ENCODE measurements at regions of chr3 and their contacts with region 1.

Region 1: DNA sequence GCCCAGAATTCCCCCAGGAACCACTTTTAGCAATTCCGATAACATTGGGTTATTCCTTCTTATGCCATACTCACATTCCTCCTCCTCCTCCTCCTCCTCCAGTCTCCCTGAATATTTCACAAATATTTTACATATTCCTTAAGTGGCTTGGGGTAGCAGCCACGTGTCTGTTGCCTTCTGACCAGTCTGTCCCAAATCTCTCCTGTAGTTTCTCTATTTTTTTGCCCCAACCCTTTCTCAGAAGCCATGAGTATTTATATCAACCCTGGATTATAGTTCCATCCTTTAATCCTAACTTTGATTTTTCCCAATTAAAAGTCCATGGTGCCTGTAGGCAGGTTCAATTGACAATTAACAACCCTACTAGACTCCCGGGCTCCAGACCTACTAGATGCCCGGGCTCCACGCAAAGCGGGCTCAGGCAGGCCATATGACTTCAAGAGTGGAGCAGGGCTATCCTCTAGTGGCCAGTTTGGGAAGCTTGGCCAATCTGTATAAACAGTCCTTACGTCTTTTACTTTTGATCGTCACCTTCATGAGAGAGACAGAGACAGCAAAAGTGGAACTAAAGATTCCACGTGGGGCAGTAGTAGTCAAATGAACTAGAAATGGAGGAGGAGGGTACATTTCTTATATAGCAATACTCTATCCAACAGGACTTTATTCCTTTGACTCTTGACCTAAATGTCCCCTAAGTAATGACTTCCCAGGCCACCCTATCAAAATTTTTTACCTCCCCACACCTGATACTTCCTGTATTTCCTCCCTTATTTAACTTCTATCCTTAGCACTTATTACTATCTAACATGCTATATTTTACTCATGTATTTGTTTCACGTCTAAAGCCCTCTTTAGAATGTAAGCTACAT is 69.7 kb downstream of the USF3 start:
- DNase-seq: peak; percentile 80
- ATAC-seq: peak; percentile 94
- H3K4me3 ChIP-seq: peak overlapping the region; percentile 34 to 68 (median 63)
- H3K4me3 Mint-ChIP-seq: peak overlapping the region; percentile 90
- H3K27ac ChIP-seq: peak overlapping the region; percentile 83 to 86
- H3K27ac Mint-ChIP-seq: peak overlapping the region; percentile 95
- H3K4me1 ChIP-seq: peaks cover 39 to 41% of the 10 kb centered on the region in 2 donors
- H3K4me1 Mint-ChIP-seq: peaks cover 58% of the 10 kb centered on the region
- H3K27me3 ChIP-seq: no peaks in the 10 kb centered on the region
- H3K27me3 Mint-ChIP-seq: no peaks in the 10 kb centered on the region
- CTCF ChIP-seq: peak; percentile 79

Region 2: DNA sequence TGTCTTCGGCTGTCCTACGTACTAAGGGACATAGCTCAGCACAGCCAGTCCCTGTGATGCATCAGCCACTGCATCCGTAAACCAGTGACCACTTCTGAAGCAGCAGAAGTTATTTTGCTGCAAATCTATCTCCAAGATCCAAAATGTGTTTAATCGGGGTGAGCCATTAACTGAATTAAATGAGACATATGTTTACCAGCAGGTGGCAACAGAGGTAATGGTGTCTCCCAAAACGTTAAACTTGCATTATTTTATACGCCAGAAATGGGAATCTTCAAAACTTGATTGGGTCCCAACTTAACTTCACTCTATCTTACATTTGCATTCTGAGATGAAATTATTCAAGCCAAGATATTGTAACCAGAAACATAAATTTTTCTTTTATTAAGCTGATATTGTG is 490.7 kb before region 1 on chr3:
- CTCF ChIA-PET with region 1: no interaction called
- POLR2A ChIA-PET with region 1: no interaction called
- intact Hi-C with region 1: loop called (anchors 10 kb)
- DNase-seq: peak; percentile 20
- ATAC-seq: no peak
- H3K4me3 ChIP-seq: no peak overlapping the region
- H3K4me3 Mint-ChIP-seq: no peak overlapping the region
- H3K27ac ChIP-seq: no peak overlapping the region
- H3K27ac Mint-ChIP-seq: no peak overlapping the region
- H3K4me1 ChIP-seq: no peaks in the 10 kb centered on the region
- H3K4me1 Mint-ChIP-seq: no peaks in the 10 kb centered on the region
- H3K27me3 ChIP-seq: no peaks in the 10 kb centered on the region
- H3K27me3 Mint-ChIP-seq: no peaks in the 10 kb centered on the region
- CTCF ChIP-seq: peak; percentile 42

Region 3: GRCh38 chr3:113514265-113514769 is 112.4 kb before region 1 on chr3:
- CTCF ChIA-PET with region 1: interaction called, 4 read pairs
- POLR2A ChIA-PET with region 1: interaction called, 12 read pairs
- intact Hi-C with region 1: no loop called
- DNase-seq: no peak
- ATAC-seq: no peak
- H3K4me3 ChIP-seq: peak overlapping the region; percentile 46 to 98 (median 92)
- H3K4me3 Mint-ChIP-seq: no peak overlapping the region
- H3K27ac ChIP-seq: peak overlapping the region; percentile 77 to 91
- H3K27ac Mint-ChIP-seq: no peak overlapping the region
- H3K4me1 ChIP-seq: peaks cover 12 to 17% of the 10 kb centered on the region in 2 donors
- H3K4me1 Mint-ChIP-seq: peaks cover 14% of the 10 kb centered on the region
- H3K27me3 ChIP-seq: peaks cover 0 to 14% (median 4%) of the 10 kb centered on the region in 4 experiments
- H3K27me3 Mint-ChIP-seq: peaks cover 23% of the 10 kb centered on the region
- CTCF ChIP-seq: no peak

Region 4: DNA sequence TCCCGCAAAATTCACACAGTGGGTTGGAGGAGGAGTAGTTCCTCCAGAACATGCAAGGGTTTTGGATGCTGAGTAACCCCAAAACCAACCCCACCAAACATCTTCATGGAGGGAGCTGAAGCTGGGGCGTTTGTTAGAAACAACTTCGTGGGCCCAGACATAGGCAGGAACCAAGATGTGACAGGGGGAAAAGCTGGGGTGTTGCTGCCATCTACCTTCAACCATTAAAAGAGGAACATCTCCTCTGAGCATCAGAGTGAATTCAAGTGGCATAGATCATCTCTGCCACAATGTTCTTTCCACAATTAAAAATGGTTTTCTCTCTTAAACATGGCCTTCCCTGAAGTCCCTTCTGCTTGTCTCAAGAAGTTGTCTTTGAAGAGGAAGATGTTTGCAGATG is 73.9 kb before region 1 on chr3:
- CTCF ChIA-PET with region 1: interaction called, 3 read pairs
- POLR2A ChIA-PET with region 1: no interaction called
- intact Hi-C with region 1: loop called (anchors 1 kb)
- DNase-seq: peak; percentile 68
- ATAC-seq: peak; percentile 62
- H3K4me3 ChIP-seq: no peak overlapping the region
- H3K4me3 Mint-ChIP-seq: no peak overlapping the region
- H3K27ac ChIP-seq: peak overlapping the region in 1 of 2 donors; percentile 42
- H3K27ac Mint-ChIP-seq: peak overlapping the region; percentile 22
- H3K4me1 ChIP-seq: peaks cover 4 to 6% of the 10 kb centered on the region in 2 donors
- H3K4me1 Mint-ChIP-seq: peaks cover 21% of the 10 kb centered on the region
- H3K27me3 ChIP-seq: no peaks in the 10 kb centered on the region
- H3K27me3 Mint-ChIP-seq: no peaks in the 10 kb centered on the region
- CTCF ChIP-seq: peak; percentile 64

Region 5: GRCh38 chr3:113606539-113607218 is 20.1 kb before region 1 on chr3:
- CTCF ChIA-PET with region 1: interaction called, 7 read pairs
- POLR2A ChIA-PET with region 1: interaction called, 4 read pairs
- intact Hi-C with region 1: loop called (anchors 2 kb)
- DNase-seq: peak; percentile 78
- ATAC-seq: peak; percentile 96
- H3K4me3 ChIP-seq: no peak overlapping the region
- H3K4me3 Mint-ChIP-seq: peak overlapping the region; percentile 69
- H3K27ac ChIP-seq: peak overlapping the region; percentile 42 to 63
- H3K27ac Mint-ChIP-seq: peak overlapping the region; percentile 85
- H3K4me1 ChIP-seq: peaks cover 19 to 23% of the 10 kb centered on the region in 2 donors
- H3K4me1 Mint-ChIP-seq: peaks cover 27% of the 10 kb centered on the region
- H3K27me3 ChIP-seq: no peaks in the 10 kb centered on the region
- H3K27me3 Mint-ChIP-seq: no peaks in the 10 kb centered on the region
- CTCF ChIP-seq: no peak

Region 6: DNA sequence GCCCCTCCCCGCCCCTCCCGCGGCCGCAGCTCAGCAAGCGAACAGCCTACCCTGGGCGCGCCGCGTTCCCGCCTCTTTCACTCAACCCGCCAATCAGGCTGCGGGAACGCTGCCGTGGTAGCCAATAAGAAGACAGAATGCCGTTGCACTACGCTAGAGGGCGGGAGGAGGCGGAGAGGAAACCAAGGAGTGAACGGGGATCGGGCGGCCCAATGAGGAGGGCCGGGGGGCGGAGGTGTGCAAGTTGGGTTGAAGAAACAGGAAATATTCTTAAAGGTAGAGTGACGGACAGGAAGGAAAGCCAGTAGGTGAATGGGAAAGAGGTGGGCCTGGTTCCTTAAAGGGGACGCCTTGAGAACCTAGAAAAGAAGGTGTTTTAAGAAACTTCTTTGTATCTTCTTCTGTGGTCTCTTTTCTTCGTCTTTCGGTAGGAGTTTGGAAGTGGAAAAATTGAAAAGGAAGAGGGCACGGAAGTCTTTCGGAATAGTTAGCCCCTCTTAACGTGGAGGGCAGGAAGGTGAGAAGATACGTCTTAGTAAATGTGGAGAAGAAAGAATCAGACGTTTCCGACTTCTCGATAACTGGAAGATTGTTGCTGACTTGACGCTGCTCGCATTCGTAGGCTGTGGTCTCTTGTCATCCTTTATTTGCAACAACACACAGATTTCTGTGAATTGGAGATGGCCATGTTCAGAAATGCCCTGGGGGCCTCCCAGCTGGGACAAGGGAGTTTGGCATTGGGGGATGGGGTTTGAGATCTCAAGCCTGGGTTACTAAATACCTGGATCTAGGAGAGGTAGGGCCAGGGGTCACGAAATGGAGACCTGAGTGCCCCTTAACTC is 70.1 kb after region 1 on chr3:
- CTCF ChIA-PET with region 1: interaction called, 5 read pairs
- POLR2A ChIA-PET with region 1: interaction called, 7 read pairs
- intact Hi-C with region 1: loop called (anchors 1 kb)
- DNase-seq: peak; percentile 100
- ATAC-seq: peak; percentile 87
- H3K4me3 ChIP-seq: peak overlapping the region; percentile 73 to 100 (median 90)
- H3K4me3 Mint-ChIP-seq: no peak overlapping the region
- H3K27ac ChIP-seq: peak overlapping the region; percentile 81 to 90
- H3K27ac Mint-ChIP-seq: no peak overlapping the region
- H3K4me1 ChIP-seq: peaks cover 39 to 40% of the 10 kb centered on the region in 2 donors
- H3K4me1 Mint-ChIP-seq: peaks cover 27% of the 10 kb centered on the region
- H3K27me3 ChIP-seq: no peaks in the 10 kb centered on the region
- H3K27me3 Mint-ChIP-seq: no peaks in the 10 kb centered on the region
- CTCF ChIP-seq: no peak

Region 7: GRCh38 chr3:113873814-113874526 is 247.2 kb after region 1 on chr3:
- CTCF ChIA-PET with region 1: no interaction called
- POLR2A ChIA-PET with region 1: no interaction called
- intact Hi-C with region 1: no loop called
- DNase-seq: no peak
- ATAC-seq: no peak
- H3K4me3 ChIP-seq: no peak overlapping the region
- H3K4me3 Mint-ChIP-seq: no peak overlapping the region
- H3K27ac ChIP-seq: no peak overlapping the region
- H3K27ac Mint-ChIP-seq: no peak overlapping the region
- H3K4me1 ChIP-seq: no peaks in the 10 kb centered on the region
- H3K4me1 Mint-ChIP-seq: no peaks in the 10 kb centered on the region
- H3K27me3 ChIP-seq: no peaks in the 10 kb centered on the region
- H3K27me3 Mint-ChIP-seq: no peaks in the 10 kb centered on the region
- CTCF ChIP-seq: no peak